PC-3 (cell line): ENCODE measurements at regions of chr2 and their contacts with region 1.

Region 1: DNA sequence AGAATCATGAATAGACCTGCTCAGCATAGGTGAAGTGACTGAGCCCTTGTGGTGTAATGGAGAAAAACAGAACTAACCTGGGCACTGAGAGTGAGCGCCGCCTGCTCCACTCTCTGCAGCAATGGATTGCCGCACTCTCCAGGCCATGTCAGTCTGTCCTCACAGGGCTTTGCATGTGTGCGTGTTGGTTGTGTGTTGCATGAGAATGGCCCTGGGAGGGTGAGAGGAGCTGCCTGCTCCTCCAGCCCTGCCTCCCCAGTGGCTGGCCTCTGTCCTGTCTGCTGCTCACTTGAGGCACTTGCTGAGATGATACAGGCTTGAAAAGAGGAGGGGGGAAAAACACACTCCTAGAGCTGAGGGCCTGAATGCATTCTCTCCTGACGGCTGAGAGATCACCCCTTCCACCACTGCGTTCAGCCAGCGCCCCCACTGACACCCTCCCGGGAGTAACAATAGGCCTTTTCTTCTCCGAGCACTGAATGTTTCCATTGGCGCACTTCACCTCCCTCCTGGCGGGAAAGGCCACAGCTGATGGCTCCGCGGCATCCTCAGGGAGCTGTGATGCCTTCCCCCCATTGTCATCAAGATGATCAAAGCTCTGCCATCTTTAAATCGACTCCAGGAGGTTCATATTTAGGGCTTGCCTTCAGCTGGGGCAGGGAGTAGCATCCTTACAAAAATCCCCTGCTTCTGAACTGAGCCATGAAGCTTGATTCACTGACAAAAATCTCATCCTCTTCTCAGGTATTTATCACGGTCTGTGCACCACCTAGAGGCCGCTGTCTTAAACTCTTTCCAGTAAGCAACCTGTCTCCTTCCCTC is 49.9 kb upstream of the DAPL1 start:
- DNase-seq: peak; percentile 76
- ATAC-seq: peak; percentile 75
- H3K4me3 ChIP-seq: no peak overlapping the region
- H3K27ac ChIP-seq: no peak overlapping the region
- H3K4me1 ChIP-seq: no peaks in the 10 kb centered on the region; the same call in 1 of the 2 replicates
- H3K27me3 ChIP-seq: no peaks in the 10 kb centered on the region
- CTCF ChIP-seq: peak; percentile 87

Region 2: GRCh38 chr2:157777427-157777826 is 967.8 kb before region 1 on chr2:
- CTCF ChIA-PET with region 1: no interaction called
- POLR2A ChIA-PET with region 1: no interaction called
- intact Hi-C with region 1: loop called (anchors 5 kb)
- DNase-seq: peak; percentile 77
- ATAC-seq: peak; percentile 37
- H3K4me3 ChIP-seq: no peak overlapping the region
- H3K27ac ChIP-seq: no peak overlapping the region
- H3K4me1 ChIP-seq: no peaks in the 10 kb centered on the region
- H3K27me3 ChIP-seq: no peaks in the 10 kb centered on the region
- CTCF ChIP-seq: peak; percentile 86

Region 3: DNA sequence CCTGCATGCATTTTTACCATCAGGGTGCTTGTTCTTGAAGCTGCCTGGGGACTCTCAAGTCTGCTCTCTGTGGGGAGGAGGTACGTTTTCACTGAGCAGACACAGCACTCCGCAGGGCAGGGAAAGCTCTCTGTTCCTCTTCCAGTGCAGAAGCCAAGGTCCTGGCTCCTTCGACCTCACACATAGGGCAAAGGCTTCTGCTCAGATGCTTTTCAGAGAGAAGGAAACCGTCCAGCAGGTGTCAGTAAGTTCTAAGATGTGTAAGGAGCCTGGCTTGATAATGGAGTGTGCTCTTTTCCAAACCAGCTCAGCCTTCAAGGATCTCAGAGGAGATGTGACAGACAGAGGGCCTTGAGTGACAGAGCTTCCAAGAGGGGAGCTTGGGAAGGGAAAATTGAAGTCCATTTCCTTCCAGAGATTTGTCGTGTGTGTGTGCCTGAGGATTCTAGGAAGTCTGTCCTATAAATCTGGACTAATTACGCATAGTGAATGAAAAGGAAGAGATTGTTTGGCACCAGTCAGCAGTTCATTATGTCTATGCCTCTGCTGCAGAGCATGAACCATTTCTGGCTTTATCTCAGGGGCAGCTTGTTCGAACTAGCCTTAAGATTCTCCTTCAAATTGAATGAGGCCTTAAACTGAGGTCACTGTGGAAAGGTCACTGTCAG is 710.9 kb before region 1 on chr2:
- CTCF ChIA-PET with region 1: no interaction called
- POLR2A ChIA-PET with region 1: no interaction called
- intact Hi-C with region 1: loop called (anchors 1 kb)
- DNase-seq: peak; percentile 76
- ATAC-seq: peak; percentile 91
- H3K4me3 ChIP-seq: no peak overlapping the region
- H3K27ac ChIP-seq: no peak overlapping the region
- H3K4me1 ChIP-seq: no peaks in the 10 kb centered on the region
- H3K27me3 ChIP-seq: peaks cover 12% of the 10 kb centered on the region
- CTCF ChIP-seq: peak; percentile 71

Region 4: GRCh38 chr2:158457826-158458616 is 287.2 kb before region 1 on chr2:
- CTCF ChIA-PET with region 1: interaction called, 9 read pairs
- POLR2A ChIA-PET with region 1: no interaction called
- intact Hi-C with region 1: loop called (anchors 1 kb)
- DNase-seq: peak; percentile 87
- ATAC-seq: peak; percentile 73
- H3K4me3 ChIP-seq: peak overlapping the region; percentile 76
- H3K27ac ChIP-seq: peak overlapping the region; percentile 30
- H3K4me1 ChIP-seq: peaks cover 33% of the 10 kb centered on the region
- H3K27me3 ChIP-seq: no peaks in the 10 kb centered on the region
- CTCF ChIP-seq: peak; percentile 30; the same call in 1 of the 2 replicates

Region 5: GRCh38 chr2:158539176-158540005 is 205.9 kb before region 1 on chr2:
- CTCF ChIA-PET with region 1: interaction called, 3 read pairs
- POLR2A ChIA-PET with region 1: no interaction called
- intact Hi-C with region 1: loop called (anchors 5 kb)
- DNase-seq: peak; percentile 96
- ATAC-seq: peak; percentile 89
- H3K4me3 ChIP-seq: no peak overlapping the region
- H3K27ac ChIP-seq: peak overlapping the region; percentile 49
- H3K4me1 ChIP-seq: peaks cover 17% of the 10 kb centered on the region
- H3K27me3 ChIP-seq: no peaks in the 10 kb centered on the region
- CTCF ChIP-seq: no peak

Region 6: DNA sequence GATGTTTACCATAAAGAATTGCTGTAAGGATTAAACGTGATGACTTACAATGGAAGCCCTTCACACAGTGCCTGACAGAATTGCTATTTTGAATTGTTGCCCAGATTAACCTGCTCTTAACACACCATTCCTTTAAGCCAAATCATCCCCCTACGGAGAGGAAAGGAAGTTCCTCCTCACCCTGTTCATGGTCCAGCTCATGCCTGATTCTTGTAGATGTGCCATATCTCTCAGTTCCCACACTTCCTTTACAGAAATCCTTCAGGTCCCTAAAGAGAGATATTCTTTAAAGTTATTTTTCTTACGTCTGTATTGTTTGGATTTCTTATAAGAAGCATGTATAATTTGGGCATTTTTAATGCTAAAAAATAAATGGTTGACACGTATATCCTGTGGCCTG is 77.7 kb before region 1 on chr2:
- CTCF ChIA-PET with region 1: no interaction called
- POLR2A ChIA-PET with region 1: no interaction called
- intact Hi-C with region 1: loop called (anchors 10 kb)
- DNase-seq: peak; percentile 66
- ATAC-seq: peak; percentile 82
- H3K4me3 ChIP-seq: no peak overlapping the region
- H3K27ac ChIP-seq: peak overlapping the region; percentile 16; the same call in 1 of the 2 replicates
- H3K4me1 ChIP-seq: peaks cover 10% of the 10 kb centered on the region; the same call in 1 of the 2 replicates
- H3K27me3 ChIP-seq: no peaks in the 10 kb centered on the region
- CTCF ChIP-seq: no peak

Region 7: DNA sequence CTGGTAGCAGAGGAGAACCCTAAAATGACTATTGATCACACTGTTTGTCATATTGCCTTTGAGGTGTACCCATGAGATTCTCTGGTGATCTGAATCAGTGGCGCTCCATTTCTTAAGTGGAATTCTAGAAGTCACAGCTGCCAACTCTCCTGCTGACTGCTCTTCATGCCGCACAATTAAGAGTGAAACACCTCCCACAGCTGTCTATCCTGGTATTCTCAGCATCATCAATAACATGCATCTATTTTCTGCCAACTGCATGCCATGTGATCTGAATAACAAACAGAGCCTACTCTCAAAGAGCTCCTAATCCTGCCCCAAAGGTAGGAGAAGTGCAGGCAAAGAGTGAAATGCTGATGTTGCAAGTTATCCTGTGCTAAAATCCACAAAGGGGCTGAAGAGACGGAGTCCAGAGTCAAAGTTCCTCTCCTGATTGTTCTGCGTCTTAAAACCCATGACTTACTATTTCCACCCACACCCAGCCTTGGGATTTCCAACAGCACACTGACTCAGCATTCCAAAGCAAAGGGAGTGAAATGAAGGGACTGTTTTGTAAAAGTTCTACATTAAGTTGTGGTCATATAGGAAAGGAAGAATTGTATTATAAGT is 36.2 kb after region 1 on chr2:
- CTCF ChIA-PET with region 1: no interaction called
- POLR2A ChIA-PET with region 1: no interaction called
- intact Hi-C with region 1: no loop called
- DNase-seq: no peak
- ATAC-seq: no peak
- H3K4me3 ChIP-seq: no peak overlapping the region
- H3K27ac ChIP-seq: no peak overlapping the region
- H3K4me1 ChIP-seq: no peaks in the 10 kb centered on the region
- H3K27me3 ChIP-seq: no peaks in the 10 kb centered on the region
- CTCF ChIP-seq: no peak

Region 8: GRCh38 chr2:158828493-158829164 is 83.4 kb after region 1 on chr2:
- CTCF ChIA-PET with region 1: no interaction called
- POLR2A ChIA-PET with region 1: no interaction called
- intact Hi-C with region 1: no loop called
- DNase-seq: no peak
- ATAC-seq: no peak; the same call in 1 of the 2 replicates
- H3K4me3 ChIP-seq: no peak overlapping the region
- H3K27ac ChIP-seq: no peak overlapping the region
- H3K4me1 ChIP-seq: no peaks in the 10 kb centered on the region
- H3K27me3 ChIP-seq: no peaks in the 10 kb centered on the region
- CTCF ChIP-seq: no peak

Region 9: GRCh38 chr2:159009940-159010339 is 264.7 kb after region 1 on chr2:
- CTCF ChIA-PET with region 1: no interaction called
- POLR2A ChIA-PET with region 1: no interaction called
- intact Hi-C with region 1: no loop called
- DNase-seq: no peak
- ATAC-seq: no peak
- H3K4me3 ChIP-seq: no peak overlapping the region
- H3K27ac ChIP-seq: 0 out of 2 replicates have a peak overlapping the region, but pooled peaks have one; percentile 19
- H3K4me1 ChIP-seq: peaks cover 20% of the 10 kb centered on the region
- H3K27me3 ChIP-seq: no peaks in the 10 kb centered on the region
- CTCF ChIP-seq: no peak